ENCODE measurements at regions of chr14 and their contacts with region 1.

Region 1: GRCh38 chr14:24310646-24311604 is at the start of gene LTB4R:
- DNase-seq: peak; percentile 80
- ATAC-seq: peak; percentile 90
- H3K4me3 Mint-ChIP-seq: peak within 1 kb of the TSS; percentile 75
- H3K27ac Mint-ChIP-seq: peak within 1 kb of the TSS; percentile 87
- H3K4me1 Mint-ChIP-seq: peaks cover 72% of the 10 kb centered on the region
- H3K27me3 Mint-ChIP-seq: no peaks in the 10 kb centered on the region
- total RNA-seq, gene LTB4R: 15.6 to 32.5 TPM

Region 2: GRCh38 chr14:23926543-23926942 is 384.4 kb before region 1 on chr14:
- CTCF ChIA-PET with region 1: no interaction called
- DNase-seq: no peak
- ATAC-seq: no peak
- H3K4me3 Mint-ChIP-seq: no peak overlapping the region
- H3K27ac Mint-ChIP-seq: no peak overlapping the region
- H3K4me1 Mint-ChIP-seq: no peaks in the 10 kb centered on the region
- H3K27me3 Mint-ChIP-seq: peaks cover 18% of the 10 kb centered on the region

Region 3: GRCh38 chr14:24215495-24216344 is 95.2 kb before region 1 on chr14 and contains the start of gene MDP1:
- CTCF ChIA-PET with region 1: interaction called, 28 read pairs
- DNase-seq: peak; percentile 94
- ATAC-seq: peak; percentile 76
- H3K4me3 Mint-ChIP-seq: peak within 1 kb of the TSS; percentile 97
- H3K27ac Mint-ChIP-seq: peak within 1 kb of the TSS; percentile 99
- H3K4me1 Mint-ChIP-seq: peaks cover 47% of the 10 kb centered on the region
- H3K27me3 Mint-ChIP-seq: no peaks in the 10 kb centered on the region
- total RNA-seq, gene MDP1: 11.4 to 16.9 TPM

Region 4: DNA sequence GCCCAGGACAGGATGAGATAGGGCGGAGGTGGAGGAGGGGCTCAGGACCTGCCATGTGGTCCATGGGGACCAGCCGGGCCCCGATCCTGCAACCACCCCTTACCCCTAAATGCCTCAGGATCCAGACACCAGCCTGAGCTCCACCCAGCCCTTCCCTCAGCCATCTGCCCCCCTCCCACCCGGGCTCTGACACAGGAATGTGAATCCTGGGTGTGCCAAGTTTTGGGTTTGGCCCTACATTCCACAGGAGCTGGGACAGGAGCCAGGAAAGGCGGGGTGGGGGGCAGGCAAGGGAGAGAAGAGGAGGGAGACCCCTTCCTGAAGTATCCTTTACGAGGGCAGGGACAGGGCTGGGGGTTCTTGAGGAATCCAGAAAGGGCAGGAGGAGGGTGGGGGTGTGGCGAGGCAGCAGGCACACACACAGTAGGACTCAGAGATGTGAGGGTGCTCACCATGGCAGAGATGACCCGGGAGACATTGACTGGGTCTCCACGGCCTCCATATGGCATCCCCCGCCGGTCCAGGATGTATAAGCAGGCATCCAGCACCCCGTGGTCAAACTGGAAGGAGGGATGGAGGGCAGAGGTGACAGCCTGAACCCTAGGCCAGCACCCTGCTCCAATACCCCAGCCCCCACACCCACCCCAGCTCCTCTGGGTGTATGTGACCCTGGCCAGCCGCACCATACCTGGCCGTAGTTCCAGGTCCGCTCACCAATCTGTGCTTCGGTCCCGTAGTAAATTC is 51.5 kb before region 1 on chr14:
- CTCF ChIA-PET with region 1: no interaction called
- DNase-seq: no peak
- ATAC-seq: no peak
- H3K4me3 Mint-ChIP-seq: no peak overlapping the region
- H3K27ac Mint-ChIP-seq: no peak overlapping the region
- H3K4me1 Mint-ChIP-seq: no peaks in the 10 kb centered on the region
- H3K27me3 Mint-ChIP-seq: no peaks in the 10 kb centered on the region

Region 5: GRCh38 chr14:24279301-24280186 is 31.4 kb before region 1 on chr14:
- CTCF ChIA-PET with region 1: interaction called, 51 read pairs
- DNase-seq: peak; percentile 53
- ATAC-seq: peak; percentile 67
- H3K4me3 Mint-ChIP-seq: no peak overlapping the region
- H3K27ac Mint-ChIP-seq: no peak overlapping the region
- H3K4me1 Mint-ChIP-seq: peaks cover 25% of the 10 kb centered on the region
- H3K27me3 Mint-ChIP-seq: no peaks in the 10 kb centered on the region

Region 6: DNA sequence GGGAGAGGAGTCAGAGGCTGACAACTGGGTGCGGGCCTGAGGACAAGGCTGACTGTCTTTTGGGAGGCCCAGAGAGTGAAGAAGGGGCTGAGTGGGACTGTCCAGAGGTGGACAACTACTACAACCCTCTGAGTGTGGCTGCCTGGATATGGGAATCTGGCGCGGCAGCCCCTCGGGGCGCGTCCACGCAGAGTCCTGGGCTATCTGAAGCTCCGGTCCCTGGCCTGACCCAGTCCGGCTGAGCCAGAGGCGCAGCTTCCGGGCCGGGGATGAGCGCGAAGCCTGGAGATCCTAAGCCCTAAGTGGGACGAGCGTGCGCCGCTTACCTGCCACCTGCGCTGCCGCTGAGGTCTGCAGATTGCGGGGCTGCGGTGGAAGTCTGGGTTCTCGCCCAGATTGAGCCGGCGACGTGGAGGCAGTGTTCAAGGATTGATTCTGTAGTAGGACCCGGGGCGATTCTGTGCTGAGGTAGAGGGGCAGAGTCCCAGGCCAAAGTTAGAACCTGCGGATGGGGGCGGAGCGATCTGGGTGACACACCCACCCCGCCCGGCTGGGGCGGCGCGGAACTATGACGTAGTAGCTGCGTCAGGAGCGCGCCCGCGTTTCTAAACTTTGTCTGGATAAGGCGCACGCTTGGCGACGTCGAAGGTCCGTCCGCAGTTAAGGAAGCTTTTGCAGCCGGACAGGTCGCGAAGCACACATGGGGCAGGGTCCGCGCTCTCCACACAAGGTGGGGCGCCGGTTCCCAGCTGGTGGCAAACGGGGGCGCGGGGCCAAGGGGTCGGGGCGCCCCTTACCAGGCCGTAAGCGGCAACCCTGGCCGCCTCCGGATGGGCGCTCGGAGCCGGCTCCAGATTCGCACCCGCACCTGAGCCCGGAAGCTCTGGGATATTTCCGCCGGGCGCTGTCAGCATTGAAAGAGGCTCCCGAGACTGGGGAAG is 11.4 kb before region 1 on chr14 and contains the starts of genes DHRS1 and NOP9:
- CTCF ChIA-PET with region 1: interaction called, 169 read pairs
- DNase-seq: peak; percentile 93
- ATAC-seq: peak; percentile 87
- H3K4me3 Mint-ChIP-seq: peak within 1 kb of the TSS; percentile 86
- H3K27ac Mint-ChIP-seq: peak within 1 kb of the TSS; percentile 89
- H3K4me1 Mint-ChIP-seq: peaks cover 55% of the 10 kb centered on the region
- H3K27me3 Mint-ChIP-seq: no peaks in the 10 kb centered on the region
- total RNA-seq, gene DHRS1: 14.2 to 26.5 TPM
- total RNA-seq, gene NOP9: 34.2 to 38.3 TPM

Region 7: DNA sequence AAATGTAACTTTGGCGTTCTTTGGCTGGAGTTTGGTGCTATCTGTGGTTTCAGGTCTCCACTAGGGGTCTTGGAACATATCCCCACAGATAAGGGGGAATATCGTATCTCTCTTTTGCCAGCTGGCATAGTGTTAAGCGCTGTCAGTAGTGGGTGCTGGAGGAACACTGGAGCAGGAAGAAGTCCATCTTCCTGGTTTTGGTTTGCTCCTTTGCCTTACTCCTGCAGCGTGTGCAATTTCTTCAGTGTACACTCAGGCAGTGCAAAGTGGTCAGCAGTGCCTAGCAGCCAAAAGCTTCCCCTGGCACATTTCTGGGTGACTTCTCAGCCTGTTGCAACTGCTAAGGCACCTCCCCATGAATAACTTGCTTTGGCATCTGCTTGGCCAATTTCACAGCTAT is 40.6 kb after region 1 on chr14:
- CTCF ChIA-PET with region 1: no interaction called
- DNase-seq: no peak
- ATAC-seq: no peak
- H3K4me3 Mint-ChIP-seq: no peak overlapping the region
- H3K27ac Mint-ChIP-seq: no peak overlapping the region
- H3K4me1 Mint-ChIP-seq: no peaks in the 10 kb centered on the region
- H3K27me3 Mint-ChIP-seq: peaks cover 55% of the 10 kb centered on the region

Region 8: GRCh38 chr14:24377657-24378056 is 66.7 kb after region 1 on chr14:
- CTCF ChIA-PET with region 1: no interaction called
- DNase-seq: no peak
- ATAC-seq: no peak
- H3K4me3 Mint-ChIP-seq: no peak overlapping the region
- H3K27ac Mint-ChIP-seq: no peak overlapping the region
- H3K4me1 Mint-ChIP-seq: no peaks in the 10 kb centered on the region
- H3K27me3 Mint-ChIP-seq: peaks cover 3% of the 10 kb centered on the region

Measured in activated CD8-positive, alpha-beta memory T cell treated with anti-CD3 and anti-CD28 coated beads, Interleukin-2, amount 10 ng/mL, durations not matched to agents 7 days and 5 days (primary cell).